Aorta (tissue), 5 donors: ENCODE measurements at regions of chr4 and their contacts with region 1.

Region 1: DNA sequence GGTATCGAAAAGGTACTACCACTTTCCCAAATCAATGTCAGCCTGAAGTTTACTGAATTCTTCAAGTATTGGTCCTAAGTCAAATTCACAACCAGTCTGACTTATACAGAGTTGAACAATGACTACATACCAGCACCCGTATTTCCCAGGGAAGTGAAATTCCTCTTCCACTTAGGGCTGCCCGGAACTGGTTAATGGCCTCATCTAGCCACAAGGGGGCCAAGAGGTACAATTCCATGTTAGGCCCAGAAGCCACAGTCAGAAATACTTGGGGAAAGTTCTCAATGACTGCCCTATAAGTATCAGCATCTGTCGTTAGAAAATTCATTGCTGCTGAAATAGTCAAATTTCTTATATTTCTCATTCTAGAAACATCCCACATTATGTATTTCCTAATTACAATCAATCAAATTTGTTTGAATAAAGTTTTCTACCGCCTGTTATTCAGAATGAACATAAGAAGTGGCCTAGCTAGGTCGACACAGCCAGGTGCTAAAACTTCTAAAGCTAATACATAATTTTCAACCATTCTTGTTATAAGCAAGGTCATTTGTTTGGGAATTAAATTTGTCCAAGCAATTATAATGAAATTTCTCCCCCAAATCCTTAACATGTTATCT is 5.7 kb upstream of the PCDH7 start:
- DNase-seq: peak in 1 of 2 donors; percentile 65
- ATAC-seq: no peak
- H3K4me3 ChIP-seq: no peak overlapping the region
- H3K27ac ChIP-seq: no peak overlapping the region
- H3K4me1 ChIP-seq: no peaks in the 10 kb centered on the region
- H3K27me3 ChIP-seq: no peaks in the 10 kb centered on the region

Region 2: GRCh38 chr4:31134720-31135119 is 420.2 kb after region 1 on chr4:
- intact Hi-C with region 1: loop called in 1 of 2 experiments (anchors 5 kb)
- DNase-seq: no peak
- ATAC-seq: no peak
- H3K4me3 ChIP-seq: no peak overlapping the region
- H3K27ac ChIP-seq: no peak overlapping the region
- H3K4me1 ChIP-seq: peaks cover 0 to 1% of the 10 kb centered on the region in 2 donors
- H3K27me3 ChIP-seq: no peaks in the 10 kb centered on the region

Region 3: GRCh38 chr4:31193521-31193920 is 479.0 kb after region 1 on chr4:
- intact Hi-C with region 1: loop called in 1 of 2 experiments (anchors 10 kb)
- DNase-seq: no peak
- ATAC-seq: no peak
- H3K4me3 ChIP-seq: no peak overlapping the region
- H3K27ac ChIP-seq: no peak overlapping the region
- H3K4me1 ChIP-seq: peaks cover 0 to 3% of the 10 kb centered on the region in 2 donors
- H3K27me3 ChIP-seq: no peaks in the 10 kb centered on the region

Region 4: GRCh38 chr4:31370866-31371465 is 656.4 kb after region 1 on chr4:
- intact Hi-C with region 1: loop called in 1 of 2 experiments (anchors 10 kb)
- DNase-seq: no peak
- ATAC-seq: peak; percentile 60
- H3K4me3 ChIP-seq: no peak overlapping the region
- H3K27ac ChIP-seq: no peak overlapping the region
- H3K4me1 ChIP-seq: no peaks in the 10 kb centered on the region
- H3K27me3 ChIP-seq: no peaks in the 10 kb centered on the region

Region 5: GRCh38 chr4:31674313-31674947 is 959.9 kb after region 1 on chr4:
- intact Hi-C with region 1: loop called (anchors 2 to 5 kb)
- DNase-seq: no peak
- ATAC-seq: no peak
- H3K4me3 ChIP-seq: no peak overlapping the region
- H3K27ac ChIP-seq: no peak overlapping the region
- H3K4me1 ChIP-seq: no peaks in the 10 kb centered on the region
- H3K27me3 ChIP-seq: no peaks in the 10 kb centered on the region